Activated B cell treated with CpG ODN at 0.5 μM for 24 hours (primary cell): ENCODE measurements at regions of chr17 and their contacts with region 1.

Region 1: GRCh38 chr17:35540589-35541404 is 3.3 kb upstream of the SLFN12L start:
- DNase-seq: peak; percentile 26
- ATAC-seq: peak; percentile 83
- H3K4me3 Mint-ChIP-seq: peak overlapping the region; percentile 88
- H3K27ac Mint-ChIP-seq: peak overlapping the region; percentile 92
- H3K4me1 Mint-ChIP-seq: peaks cover 43% of the 10 kb centered on the region
- H3K27me3 Mint-ChIP-seq: no peaks in the 10 kb centered on the region
- CTCF ChIP-seq: no peak

Region 2: DNA sequence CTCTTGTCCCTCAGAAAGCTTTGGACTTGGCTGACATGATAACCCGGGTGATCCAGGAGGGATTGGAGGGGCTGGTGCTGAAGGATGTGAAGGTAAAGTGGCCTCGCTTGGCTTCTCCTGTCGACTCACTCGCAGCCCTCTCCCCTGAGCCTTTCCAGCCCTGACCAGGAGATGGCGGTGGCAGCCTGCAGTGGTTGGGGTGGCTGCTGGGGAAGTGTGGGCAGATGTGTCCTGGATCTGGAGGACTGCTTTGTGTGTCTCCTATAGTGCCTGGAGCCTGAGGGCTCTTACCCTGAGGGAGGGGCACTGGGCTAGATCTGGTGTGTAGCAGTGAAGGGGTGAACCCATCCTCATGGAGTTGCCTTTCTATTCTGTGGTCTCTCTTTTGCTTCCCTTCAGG is 542.6 kb before region 1 on chr17:
- CTCF ChIA-PET with region 1: no interaction called
- POLR2A ChIA-PET with region 1: no interaction called
- intact Hi-C with region 1: loop called (anchors 2 kb)
- DNase-seq: peak; percentile 65
- ATAC-seq: peak; percentile 100
- H3K4me3 Mint-ChIP-seq: no peak overlapping the region
- H3K27ac Mint-ChIP-seq: peak overlapping the region; percentile 66
- H3K4me1 Mint-ChIP-seq: peaks cover 4% of the 10 kb centered on the region
- H3K27me3 Mint-ChIP-seq: no peaks in the 10 kb centered on the region
- CTCF ChIP-seq: no peak

Region 3: DNA sequence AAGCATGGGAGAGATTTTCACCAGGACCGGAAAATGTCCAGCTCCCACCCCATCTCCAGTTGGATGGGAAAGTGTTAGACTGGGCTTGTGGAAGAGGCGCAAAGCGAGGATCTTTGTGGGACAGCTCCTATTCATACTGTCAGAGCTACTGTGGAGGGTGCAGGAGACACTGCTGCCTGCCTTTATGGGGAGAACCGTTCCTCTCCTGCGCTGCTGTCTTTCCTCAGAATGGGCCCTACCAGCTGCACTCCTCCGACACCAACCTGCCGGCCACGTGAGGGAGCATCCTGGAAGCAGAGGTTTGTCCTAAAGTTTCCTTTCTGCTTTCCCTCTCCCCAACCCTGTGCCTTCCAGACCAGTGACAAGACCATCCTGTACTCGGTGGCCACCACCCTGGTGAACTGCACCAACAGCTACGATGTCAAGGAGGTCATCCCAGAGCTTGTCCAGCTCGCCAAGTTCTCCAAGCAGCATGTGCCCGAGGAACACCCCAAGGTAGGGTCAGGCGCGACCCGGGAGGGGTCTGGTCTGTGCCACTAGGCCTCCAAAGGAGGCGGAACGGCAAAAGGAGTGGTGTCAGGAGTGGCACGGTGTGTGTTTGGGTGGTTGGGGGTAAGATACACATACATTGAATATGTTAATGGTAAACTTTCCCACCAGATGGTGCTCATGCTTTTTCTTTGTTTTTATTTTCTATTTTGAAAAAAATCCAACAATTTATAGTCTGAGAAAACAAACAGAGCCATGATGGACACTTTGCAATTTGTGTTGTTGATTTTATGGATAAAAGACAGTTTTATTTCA is 369.6 kb before region 1 on chr17:
- CTCF ChIA-PET with region 1: interaction called, 4 read pairs
- POLR2A ChIA-PET with region 1: no interaction called
- intact Hi-C with region 1: loop called (anchors 1 kb)
- DNase-seq: no peak
- ATAC-seq: no peak
- H3K4me3 Mint-ChIP-seq: no peak overlapping the region
- H3K27ac Mint-ChIP-seq: no peak overlapping the region
- H3K4me1 Mint-ChIP-seq: no peaks in the 10 kb centered on the region
- H3K27me3 Mint-ChIP-seq: peaks cover 16% of the 10 kb centered on the region
- CTCF ChIP-seq: no peak

Region 4: DNA sequence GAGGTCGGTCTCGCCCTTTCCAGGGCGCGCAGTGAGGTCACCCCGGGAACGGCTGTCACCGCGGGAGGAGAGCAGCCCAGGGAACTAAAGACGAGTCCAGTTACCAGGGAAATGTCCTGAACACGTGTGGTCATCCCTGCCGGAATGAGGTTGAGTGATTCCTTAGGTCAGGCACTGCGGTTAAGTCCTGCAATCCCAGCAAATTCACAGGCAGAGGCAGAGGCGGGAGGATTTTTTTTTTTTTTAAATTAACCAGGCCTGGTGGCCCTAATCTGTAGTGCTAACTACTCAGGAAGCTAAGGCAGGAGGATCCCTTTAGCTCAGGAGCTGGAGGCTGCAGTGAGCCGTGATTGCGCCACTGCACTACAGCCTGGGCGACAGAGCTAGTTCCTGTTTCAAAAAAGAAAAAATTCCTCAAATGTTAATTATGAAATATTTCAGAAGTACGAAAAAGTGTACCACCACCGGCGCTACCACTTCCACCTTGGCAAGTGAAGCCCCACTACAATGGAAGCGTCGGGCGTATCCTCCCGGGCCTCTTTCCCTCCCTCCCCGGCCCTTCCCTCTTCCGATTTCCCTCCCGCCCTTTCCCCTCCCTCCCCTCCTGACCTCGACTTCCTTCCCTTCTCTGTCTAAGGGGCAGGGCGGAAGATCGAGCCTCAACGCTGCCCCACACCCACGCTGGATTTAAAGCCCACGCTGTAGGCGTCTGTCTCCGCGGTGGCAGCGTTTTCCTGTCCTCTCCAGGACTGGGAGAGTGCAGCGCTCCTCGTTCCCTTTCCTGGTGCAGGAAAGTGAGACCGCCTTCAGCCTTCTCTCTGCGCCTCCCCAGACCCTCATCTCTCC is 194.6 kb before region 1 on chr17:
- CTCF ChIA-PET with region 1: no interaction called
- POLR2A ChIA-PET with region 1: interaction called, 3 read pairs
- intact Hi-C with region 1: loop called (anchors 1 kb)
- DNase-seq: no peak
- ATAC-seq: peak; percentile 74
- H3K4me3 Mint-ChIP-seq: peak overlapping the region; percentile 86
- H3K27ac Mint-ChIP-seq: peak overlapping the region; percentile 79
- H3K4me1 Mint-ChIP-seq: peaks cover 40% of the 10 kb centered on the region
- H3K27me3 Mint-ChIP-seq: no peaks in the 10 kb centered on the region
- CTCF ChIP-seq: no peak

Region 5: GRCh38 chr17:35404360-35404759 is 136.4 kb before region 1 on chr17:
- CTCF ChIA-PET with region 1: no interaction called
- POLR2A ChIA-PET with region 1: no interaction called
- intact Hi-C with region 1: no loop called
- DNase-seq: no peak
- ATAC-seq: no peak
- H3K4me3 Mint-ChIP-seq: no peak overlapping the region
- H3K27ac Mint-ChIP-seq: no peak overlapping the region
- H3K4me1 Mint-ChIP-seq: no peaks in the 10 kb centered on the region
- H3K27me3 Mint-ChIP-seq: no peaks in the 10 kb centered on the region
- CTCF ChIP-seq: no peak

Region 6: DNA sequence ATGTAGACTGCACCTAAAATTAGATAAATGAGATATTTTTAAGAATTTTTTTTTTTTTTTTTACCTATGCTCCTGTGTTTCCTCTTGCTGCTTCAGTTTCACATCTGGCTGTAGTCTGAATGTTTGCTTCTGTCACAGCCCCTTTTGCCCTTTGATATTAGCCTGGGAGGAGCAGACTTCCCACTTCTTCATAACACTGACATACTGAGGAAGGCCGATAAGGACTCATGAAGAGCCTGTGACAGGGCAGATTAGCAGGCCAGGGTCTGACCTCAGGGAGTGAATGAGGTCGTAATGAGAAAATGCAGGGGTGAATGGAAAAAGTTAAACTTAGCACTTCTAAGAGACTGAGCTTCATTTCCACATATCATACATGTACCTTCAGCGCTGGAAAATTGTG is 19.9 kb after region 1 on chr17 and contains the start of gene SLFN14:
- CTCF ChIA-PET with region 1: no interaction called
- POLR2A ChIA-PET with region 1: no interaction called
- intact Hi-C with region 1: no loop called
- DNase-seq: no peak
- ATAC-seq: no peak
- H3K4me3 Mint-ChIP-seq: no peak within 1 kb of the TSS
- H3K27ac Mint-ChIP-seq: no peak within 1 kb of the TSS
- H3K4me1 Mint-ChIP-seq: no peaks in the 10 kb centered on the region
- H3K27me3 Mint-ChIP-seq: peaks cover 23% of the 10 kb centered on the region
- CTCF ChIP-seq: no peak
- total RNA-seq, gene SLFN14: not detected in 2 replicates

Region 7: DNA sequence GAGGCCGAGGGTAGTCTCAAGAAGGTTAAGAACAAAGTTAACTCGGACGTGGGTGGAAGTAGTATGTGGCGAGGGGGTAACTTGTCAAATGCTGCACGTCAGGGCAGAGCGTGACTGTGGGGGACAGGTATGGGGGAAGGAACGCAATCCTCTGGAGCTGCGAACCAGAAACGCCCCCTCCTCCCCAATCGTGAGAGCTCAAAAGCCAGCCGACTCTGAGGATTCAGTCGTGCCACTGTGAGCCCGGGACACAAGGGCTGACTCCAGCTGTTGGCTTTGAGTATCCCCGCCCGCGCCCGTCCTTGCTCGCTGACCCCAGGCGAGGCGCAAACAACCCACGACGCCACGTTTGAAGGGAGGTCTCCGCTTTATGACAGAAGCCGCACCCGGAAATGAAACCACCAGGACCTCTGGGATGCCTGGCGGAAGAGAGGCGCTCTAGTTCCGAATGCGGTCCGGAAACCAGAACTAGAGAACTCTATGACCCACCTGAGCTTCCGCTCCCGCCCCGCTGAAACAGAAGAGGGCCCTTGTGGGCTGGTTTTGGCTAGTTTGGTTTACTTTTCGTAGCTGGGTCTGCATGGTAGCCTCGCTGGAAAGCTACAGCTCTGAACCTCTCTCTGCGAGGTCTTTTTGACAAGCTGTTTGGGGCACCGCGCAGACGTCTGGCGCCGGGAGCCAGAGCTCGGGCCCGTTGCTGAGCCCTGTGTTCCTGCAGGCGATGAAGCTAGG is 37.6 kb after region 1 on chr17 and contains the start of gene PEX12:
- CTCF ChIA-PET with region 1: interaction called, 3 read pairs
- POLR2A ChIA-PET with region 1: interaction called, 22 read pairs
- intact Hi-C with region 1: loop called (anchors 2 kb)
- DNase-seq: peak; percentile 71
- ATAC-seq: peak; percentile 95
- H3K4me3 Mint-ChIP-seq: peak within 1 kb of the TSS; percentile 96
- H3K27ac Mint-ChIP-seq: peak within 1 kb of the TSS; percentile 98
- H3K4me1 Mint-ChIP-seq: peaks cover 26% of the 10 kb centered on the region
- H3K27me3 Mint-ChIP-seq: no peaks in the 10 kb centered on the region
- CTCF ChIP-seq: no peak
- total RNA-seq, gene PEX12: 4.1 and 4.8 TPM in 2 replicates

Region 8: GRCh38 chr17:35747540-35748017 is 206.8 kb after region 1 on chr17:
- CTCF ChIA-PET with region 1: interaction called, 5 read pairs
- POLR2A ChIA-PET with region 1: interaction called, 3 read pairs
- intact Hi-C with region 1: loop called (anchors 1 kb)
- DNase-seq: peak; percentile 64
- ATAC-seq: peak; percentile 97
- H3K4me3 Mint-ChIP-seq: no peak overlapping the region
- H3K27ac Mint-ChIP-seq: no peak overlapping the region
- H3K4me1 Mint-ChIP-seq: peaks cover 6% of the 10 kb centered on the region
- H3K27me3 Mint-ChIP-seq: peaks cover 35% of the 10 kb centered on the region
- CTCF ChIP-seq: no peak